KBM-7 (cell line): ENCODE measurements at regions of chr11 and their contacts with region 1.

Region 1: GRCh38 chr11:130861902-130862860 is 54.1 kb downstream of the SNX19 start:
- DNase-seq: peak; percentile 81

Region 2: GRCh38 chr11:130213143-130213978 is 648.8 kb before region 1 on chr11:
- in situ Hi-C with region 1: loop called (anchors 25 kb)
- DNase-seq: peak; percentile 58

Region 3: DNA sequence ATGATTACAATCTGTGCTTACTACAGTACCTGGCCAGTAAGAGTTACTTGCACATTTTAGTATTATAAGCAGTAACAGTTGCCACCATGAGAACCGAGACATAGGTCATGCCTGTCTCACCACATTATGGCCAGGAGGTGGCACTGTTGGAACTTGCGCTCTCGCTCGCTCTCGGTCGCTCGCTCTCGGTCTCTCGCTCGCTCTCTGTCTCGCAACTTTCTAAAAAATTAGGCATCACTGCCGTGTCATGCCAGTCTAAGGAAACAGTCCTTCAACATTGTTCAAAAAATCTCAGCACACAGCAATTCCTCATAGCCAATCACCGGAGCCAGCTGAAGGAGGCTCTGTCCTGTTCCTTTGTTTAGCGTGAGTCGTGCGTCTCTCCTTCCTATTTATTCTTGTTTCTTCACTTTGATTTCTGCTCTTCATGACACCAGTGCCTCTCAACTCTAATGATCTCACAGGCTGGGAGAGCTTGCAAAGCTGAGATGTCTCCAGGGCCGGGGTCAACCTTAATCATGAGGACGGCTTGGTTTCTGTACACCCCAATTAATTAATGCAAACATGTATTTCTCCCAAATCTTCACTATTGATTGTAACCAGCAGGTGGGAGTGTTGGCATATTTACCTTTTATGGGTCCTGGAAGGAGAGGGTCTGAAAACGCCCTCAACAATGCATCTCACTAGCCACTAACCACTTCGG is 427.5 kb before region 1 on chr11:
- in situ Hi-C with region 1: loop called (anchors 25 kb)
- DNase-seq: peak; percentile 85

Region 4: DNA sequence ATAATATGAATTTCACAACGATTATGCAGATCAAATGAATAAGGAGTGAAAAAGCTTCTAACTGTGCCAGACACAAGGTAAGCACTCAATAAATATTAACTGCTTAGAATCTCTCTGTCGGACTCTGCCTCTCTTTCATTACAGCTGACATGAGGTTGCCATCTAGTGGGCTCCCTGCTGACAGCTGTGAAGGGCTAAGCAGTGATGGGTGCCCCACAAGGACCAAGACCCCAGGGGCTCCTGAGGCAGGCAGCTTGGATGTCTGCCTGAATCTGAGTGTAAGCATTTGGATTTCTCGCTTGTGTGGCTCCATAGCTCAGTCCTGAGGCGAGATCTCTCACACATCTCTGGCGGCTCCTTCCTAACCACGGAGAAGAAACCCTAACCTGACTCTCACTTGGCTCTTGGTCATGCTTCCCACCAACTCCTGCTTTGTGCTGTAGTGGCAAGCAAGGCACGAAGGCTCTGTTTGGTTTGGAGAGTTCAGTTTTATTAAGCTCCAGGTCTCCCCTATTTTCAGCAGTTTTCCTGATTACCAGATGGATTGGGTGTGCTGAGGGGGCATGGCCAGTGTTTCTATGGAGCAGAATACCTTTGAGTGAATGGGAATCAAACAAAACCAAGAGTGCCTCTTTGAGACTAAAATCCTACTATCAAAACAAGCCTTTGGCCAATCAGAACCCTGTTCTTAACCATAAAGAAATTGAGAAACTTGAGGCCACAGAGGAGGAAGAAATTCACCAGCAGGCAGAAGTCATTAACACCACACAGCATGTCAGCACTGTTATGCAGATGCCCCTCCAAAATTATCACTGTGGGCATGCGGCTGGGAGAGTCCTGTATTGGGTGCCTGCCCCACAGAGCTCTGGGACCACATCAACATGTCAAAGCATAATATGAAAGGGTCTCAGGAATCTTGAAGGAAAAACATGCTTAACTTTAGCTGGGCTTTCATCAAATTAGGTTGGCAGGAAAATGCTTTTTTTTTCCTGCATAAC is 355.4 kb after region 1 on chr11:
- in situ Hi-C with region 1: no loop called
- DNase-seq: no peak